CD4-positive, alpha-beta T cell (primary cell): ENCODE measurements at regions of chr19 and their contacts with region 1.

Region 1: GRCh38 chr19:1275260-1275975 is at the start of gene FAM174C:
- DNase-seq: peak; percentile 88 to 99 (median 95)
- ATAC-seq: peak; percentile 74
- H3K4me3 ChIP-seq: peak within 1 kb of the TSS; percentile 91
- H3K4me3 Mint-ChIP-seq: peak within 1 kb of the TSS; percentile 94
- H3K27ac ChIP-seq: peak within 1 kb of the TSS; percentile 80 to 96
- H3K27ac Mint-ChIP-seq: peak within 1 kb of the TSS; percentile 96
- H3K4me1 ChIP-seq: peaks cover 75% of the 10 kb centered on the region
- H3K4me1 Mint-ChIP-seq: peaks cover 58% of the 10 kb centered on the region
- H3K27me3 ChIP-seq: no peaks in the 10 kb centered on the region
- H3K27me3 Mint-ChIP-seq: no peaks in the 10 kb centered on the region
- CTCF ChIP-seq: no peak
- total RNA-seq, gene FAM174C: 32.0 to 38.3 TPM

Region 2: DNA sequence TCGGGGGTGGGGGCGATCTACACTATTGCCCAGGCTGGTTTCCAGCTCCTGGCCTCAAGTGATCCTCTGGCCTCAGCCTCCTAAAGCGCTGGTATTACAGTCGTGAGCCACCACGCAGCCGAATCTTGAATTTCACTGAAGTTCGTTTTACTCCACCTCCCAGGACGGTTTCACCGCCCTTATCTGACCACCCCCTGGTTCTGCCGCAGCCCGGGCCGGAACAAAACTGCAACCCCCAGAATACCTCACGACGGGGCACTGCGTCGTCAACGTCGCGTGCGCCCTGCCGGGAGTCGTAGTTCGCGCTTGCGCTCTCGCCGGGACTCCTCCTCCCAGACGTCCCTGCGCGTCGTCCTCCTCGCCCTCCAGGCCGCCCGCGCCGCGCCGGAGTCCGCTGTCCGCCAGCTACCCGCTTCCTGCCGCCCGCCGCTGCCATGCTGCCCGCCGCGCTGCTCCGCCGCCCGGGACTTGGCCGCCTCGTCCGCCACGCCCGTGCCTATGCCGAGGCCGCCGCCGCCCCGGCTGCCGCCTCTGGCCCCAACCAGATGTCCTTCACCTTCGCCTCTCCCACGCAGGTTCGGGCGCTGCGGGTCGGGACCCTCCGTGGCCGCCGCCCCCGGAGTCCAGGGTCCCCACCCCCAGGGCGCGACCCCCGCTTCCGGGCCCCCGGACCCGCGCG is 33.9 kb before region 1 on chr19 and contains the start of gene ATP5F1D:
- CTCF ChIA-PET with region 1: interaction called, 26 read pairs
- POLR2A ChIA-PET with region 1: interaction called, 23 read pairs
- intact Hi-C with region 1: no loop called
- DNase-seq: peak; percentile 82 to 96 (median 92)
- ATAC-seq: peak; percentile 63
- H3K4me3 ChIP-seq: peak within 1 kb of the TSS; percentile 53
- H3K4me3 Mint-ChIP-seq: peak within 1 kb of the TSS; percentile 91
- H3K27ac ChIP-seq: peak within 1 kb of the TSS in 1 of 2 donors; percentile 25
- H3K27ac Mint-ChIP-seq: peak within 1 kb of the TSS; percentile 89
- H3K4me1 ChIP-seq: peaks cover 78% of the 10 kb centered on the region
- H3K4me1 Mint-ChIP-seq: peaks cover 31% of the 10 kb centered on the region
- H3K27me3 ChIP-seq: peaks cover 6% of the 10 kb centered on the region in 2 experiments
- H3K27me3 Mint-ChIP-seq: peaks cover 13% of the 10 kb centered on the region
- CTCF ChIP-seq: no peak
- total RNA-seq, gene ATP5F1D: 77.6 to 92.6 TPM

Region 3: DNA sequence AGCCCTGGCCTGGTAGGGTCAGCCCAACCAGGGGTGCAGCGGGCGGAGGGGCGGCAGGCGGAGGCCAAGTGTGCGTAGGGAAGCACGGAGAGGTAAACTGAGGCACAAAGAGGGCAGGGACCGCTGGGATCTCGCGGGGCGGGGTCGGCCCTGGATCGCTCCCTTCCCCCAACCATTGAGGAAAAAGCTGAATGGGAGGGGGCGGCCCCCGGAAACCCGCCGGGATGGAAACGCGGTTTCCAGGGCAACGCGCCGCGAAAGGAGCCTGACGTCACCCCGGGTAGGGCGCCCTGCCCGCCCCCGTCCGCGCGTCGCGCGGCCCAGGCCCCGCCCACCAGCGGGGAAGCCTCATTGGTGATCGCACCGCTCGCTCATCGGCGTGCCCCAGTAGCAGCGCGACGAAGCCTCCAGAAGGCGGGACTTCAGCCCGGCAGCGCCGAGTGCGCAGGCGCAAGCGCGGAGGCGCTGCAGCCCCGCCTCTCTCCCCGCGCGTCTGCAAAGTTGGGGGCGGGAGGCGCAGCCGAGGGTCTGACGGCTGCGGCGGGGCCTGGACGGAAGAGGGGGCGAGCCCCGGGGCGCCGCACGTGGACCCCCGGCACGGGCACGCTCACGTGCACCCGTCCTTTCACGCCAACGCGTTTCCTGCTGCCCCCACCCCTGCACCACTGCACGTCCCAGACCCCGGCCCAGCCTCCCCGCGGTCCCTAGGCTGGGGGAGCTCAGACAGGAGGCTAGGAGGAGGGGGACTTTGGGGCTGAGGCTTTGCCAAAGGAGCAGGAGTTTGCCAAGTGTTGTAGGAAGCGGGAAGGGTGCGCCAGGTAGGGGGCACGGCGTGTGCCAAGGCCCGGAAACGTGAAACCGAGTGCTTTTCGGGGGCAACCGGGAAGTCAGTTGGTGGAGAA is 14.5 kb before region 1 on chr19:
- CTCF ChIA-PET with region 1: interaction called, 9 read pairs
- POLR2A ChIA-PET with region 1: interaction called, 25 read pairs
- intact Hi-C with region 1: no loop called
- DNase-seq: peak; percentile 94 to 99 (median 98)
- ATAC-seq: peak; percentile 79
- H3K4me3 ChIP-seq: peak overlapping the region; percentile 78
- H3K4me3 Mint-ChIP-seq: peak overlapping the region; percentile 92
- H3K27ac ChIP-seq: peak overlapping the region; percentile 98 to 99
- H3K27ac Mint-ChIP-seq: peak overlapping the region; percentile 95
- H3K4me1 ChIP-seq: peaks cover 84% of the 10 kb centered on the region
- H3K4me1 Mint-ChIP-seq: peaks cover 46% of the 10 kb centered on the region
- H3K27me3 ChIP-seq: no peaks in the 10 kb centered on the region
- H3K27me3 Mint-ChIP-seq: no peaks in the 10 kb centered on the region
- CTCF ChIP-seq: no peak

Region 4: DNA sequence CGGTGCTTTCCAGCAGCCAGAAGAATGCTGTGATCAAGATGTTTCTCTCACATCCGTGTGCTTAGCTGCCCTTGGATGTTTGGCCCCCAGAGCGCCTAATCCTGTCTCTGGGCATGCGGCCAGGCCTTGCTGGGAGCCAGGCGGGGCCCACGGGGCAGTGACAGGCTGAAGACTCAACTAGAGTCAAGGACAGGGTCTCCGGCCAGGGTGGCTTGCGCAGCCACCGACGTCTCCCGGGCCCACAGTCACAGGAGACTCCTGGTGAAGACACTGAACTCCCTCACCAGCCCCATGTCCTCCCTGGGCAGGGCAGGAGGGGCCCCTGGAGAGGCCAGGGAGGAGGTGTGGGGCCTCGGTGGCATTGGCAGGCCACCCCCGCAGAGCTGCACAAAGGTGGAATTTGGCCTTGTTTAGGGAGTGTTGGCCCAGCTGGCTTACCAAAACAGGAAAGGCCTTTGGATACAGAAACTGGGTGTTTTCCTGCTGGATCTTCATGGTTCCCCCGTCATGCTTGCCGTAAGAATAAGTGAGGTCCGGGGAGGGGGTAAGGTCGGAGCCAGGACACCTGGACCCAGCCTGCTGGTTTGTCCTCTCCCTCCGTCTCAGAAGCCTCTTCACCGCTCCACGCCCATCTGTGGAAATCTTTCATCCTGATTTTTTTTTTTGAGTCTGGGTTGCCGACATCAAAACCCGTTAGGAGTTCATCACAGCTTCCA is 98.3 kb after region 1 on chr19:
- CTCF ChIA-PET with region 1: interaction called, 12 read pairs
- POLR2A ChIA-PET with region 1: interaction called, 6 read pairs
- intact Hi-C with region 1: loop called (anchors 1 kb)
- DNase-seq: no peak
- ATAC-seq: no peak
- H3K4me3 ChIP-seq: no peak overlapping the region
- H3K4me3 Mint-ChIP-seq: no peak overlapping the region
- H3K27ac ChIP-seq: no peak overlapping the region
- H3K27ac Mint-ChIP-seq: no peak overlapping the region
- H3K4me1 ChIP-seq: no peaks in the 10 kb centered on the region
- H3K4me1 Mint-ChIP-seq: no peaks in the 10 kb centered on the region
- H3K27me3 ChIP-seq: no peaks in the 10 kb centered on the region
- H3K27me3 Mint-ChIP-seq: no peaks in the 10 kb centered on the region
- CTCF ChIP-seq: no peak

Region 5: GRCh38 chr19:1406774-1407499 is 131.5 kb after region 1 on chr19:
- CTCF ChIA-PET with region 1: no interaction called
- POLR2A ChIA-PET with region 1: interaction called, 5 read pairs
- intact Hi-C with region 1: loop called (anchors 2 to 10 kb)
- DNase-seq: peak; percentile 98 to 100 (median 99)
- ATAC-seq: peak; percentile 79
- H3K4me3 ChIP-seq: peak overlapping the region; percentile 51
- H3K4me3 Mint-ChIP-seq: peak overlapping the region; percentile 92
- H3K27ac ChIP-seq: peak overlapping the region; percentile 52 to 73
- H3K27ac Mint-ChIP-seq: peak overlapping the region; percentile 78
- H3K4me1 ChIP-seq: peaks cover 56% of the 10 kb centered on the region
- H3K4me1 Mint-ChIP-seq: peaks cover 46% of the 10 kb centered on the region
- H3K27me3 ChIP-seq: peaks cover 0 to 11% of the 10 kb centered on the region in 2 experiments
- H3K27me3 Mint-ChIP-seq: no peaks in the 10 kb centered on the region
- CTCF ChIP-seq: peak; percentile 62

Region 6: DNA sequence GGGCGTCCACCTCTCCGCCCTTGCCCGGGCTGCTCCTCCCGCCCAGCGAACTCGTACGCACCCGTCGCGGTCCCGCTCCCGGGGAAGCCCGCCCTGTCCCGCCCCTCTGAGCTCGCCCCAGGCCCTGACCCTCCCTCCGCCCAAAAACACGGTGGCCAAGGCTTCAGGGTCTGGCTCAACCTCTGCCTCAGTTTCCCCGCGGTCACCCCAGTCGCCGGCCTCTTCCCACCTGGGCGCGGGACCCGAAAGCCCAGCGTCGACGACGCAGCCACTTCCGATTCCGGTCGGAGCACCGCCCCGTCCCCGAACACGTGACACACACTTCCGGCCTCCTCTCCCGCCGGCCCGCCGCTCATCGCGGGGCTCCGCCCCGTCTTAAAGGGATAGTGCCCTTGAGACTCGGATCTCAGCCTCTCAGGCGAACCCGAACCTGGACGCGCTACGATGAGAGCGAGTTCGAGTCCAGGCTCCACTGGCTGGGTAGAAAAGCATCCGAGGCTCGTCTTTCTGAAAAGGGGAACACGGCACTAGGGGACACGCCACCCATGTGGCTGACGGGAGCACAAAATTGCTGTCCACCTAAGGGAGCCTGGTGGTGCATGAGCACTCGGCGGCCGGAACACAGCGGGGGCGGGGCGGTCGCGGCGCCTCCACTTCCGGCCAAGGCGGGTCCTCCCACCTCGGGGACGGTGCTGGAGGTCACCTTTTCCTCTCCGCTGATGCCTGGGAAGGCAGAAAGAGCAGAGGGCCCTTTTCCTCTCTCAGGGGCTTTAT is 203.7 kb after region 1 on chr19 and contains the start of gene C19orf25:
- CTCF ChIA-PET with region 1: no interaction called
- POLR2A ChIA-PET with region 1: no interaction called
- intact Hi-C with region 1: loop called in 1 of 2 experiments (anchors 10 kb)
- DNase-seq: peak; percentile 82 to 95 (median 89)
- ATAC-seq: peak; percentile 96
- H3K4me3 ChIP-seq: peak within 1 kb of the TSS; percentile 91
- H3K4me3 Mint-ChIP-seq: peak within 1 kb of the TSS; percentile 96
- H3K27ac ChIP-seq: peak within 1 kb of the TSS; percentile 59 to 80
- H3K27ac Mint-ChIP-seq: peak within 1 kb of the TSS; percentile 86
- H3K4me1 ChIP-seq: peaks cover 23% of the 10 kb centered on the region
- H3K4me1 Mint-ChIP-seq: peaks cover 18% of the 10 kb centered on the region
- H3K27me3 ChIP-seq: no peaks in the 10 kb centered on the region
- H3K27me3 Mint-ChIP-seq: no peaks in the 10 kb centered on the region
- CTCF ChIP-seq: no peak
- total RNA-seq, gene C19orf25: 14.9 to 15.8 TPM